Transverse colon (tissue), 4 donors: ENCODE measurements at regions of chr12 and their contacts with region 1.

Region 1: GRCh38 chr12:46921764-46922133 is 96.0 kb upstream of the SLC38A4 start:
- DNase-seq: no peak
- H3K4me3 ChIP-seq: no peak overlapping the region
- H3K27ac ChIP-seq: peak overlapping the region in 2 of 4 donors; percentile 17 to 24
- H3K4me1 ChIP-seq: no peaks in the 10 kb centered on the region
- H3K27me3 ChIP-seq: no peaks in the 10 kb centered on the region
- CTCF ChIP-seq: no peak
- EP300 ChIP-seq: no peak
- POLR2A ChIP-seq: no peak

Region 2: DNA sequence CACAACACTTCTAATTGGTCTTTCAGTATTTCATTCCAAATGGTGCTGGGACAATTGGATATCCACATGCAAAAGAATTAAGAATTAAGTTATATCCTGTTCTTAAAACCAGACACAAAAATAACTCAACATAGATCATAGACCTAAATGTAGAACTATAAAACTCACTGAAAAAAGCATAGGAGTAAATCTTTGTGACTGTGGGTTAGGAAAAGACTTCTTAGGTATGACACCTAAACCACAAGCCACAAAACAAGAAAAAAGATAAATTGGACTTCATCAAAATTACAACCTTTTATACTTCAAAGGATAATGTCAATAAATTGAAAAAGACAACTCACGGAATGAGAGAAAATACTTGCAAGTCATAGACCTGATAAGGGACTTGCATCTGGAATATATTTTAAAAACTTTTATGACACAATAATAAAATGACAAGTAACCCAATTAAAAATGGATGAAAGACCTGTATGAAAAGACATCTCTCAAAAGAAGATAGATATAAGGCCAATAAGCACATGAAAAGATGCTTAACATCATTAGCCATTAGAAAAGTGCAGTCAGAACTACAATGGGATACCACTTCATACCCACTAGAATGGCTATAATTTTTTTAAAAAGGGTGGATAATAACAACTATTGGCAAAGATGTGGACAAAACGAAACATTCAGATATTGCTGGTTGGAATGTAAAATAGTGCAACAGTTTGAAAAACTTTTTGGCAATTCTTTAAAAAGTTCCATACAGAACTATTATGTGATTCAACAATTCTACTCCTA is 23.4 kb before region 1 on chr12:
- in situ Hi-C with region 1: no loop called
- intact Hi-C with region 1: loop called (anchors 2 kb)
- DNase-seq: no peak
- H3K4me3 ChIP-seq: no peak overlapping the region
- H3K27ac ChIP-seq: no peak overlapping the region
- H3K4me1 ChIP-seq: peaks cover 0 to 5% (median 0%) of the 10 kb centered on the region in 4 donors
- H3K27me3 ChIP-seq: no peaks in the 10 kb centered on the region
- CTCF ChIP-seq: no peak
- EP300 ChIP-seq: no peak
- POLR2A ChIP-seq: no peak

Region 3: GRCh38 chr12:46956451-46957035 is 34.8 kb after region 1 on chr12:
- in situ Hi-C with region 1: no loop called
- intact Hi-C with region 1: no loop called
- DNase-seq: no peak
- H3K4me3 ChIP-seq: no peak overlapping the region
- H3K27ac ChIP-seq: no peak overlapping the region
- H3K4me1 ChIP-seq: no peaks in the 10 kb centered on the region
- H3K27me3 ChIP-seq: no peaks in the 10 kb centered on the region
- CTCF ChIP-seq: no peak
- EP300 ChIP-seq: no peak
- POLR2A ChIP-seq: no peak